ENCODE measurements at regions of chr4 and their contacts with region 1.

Region 1: DNA sequence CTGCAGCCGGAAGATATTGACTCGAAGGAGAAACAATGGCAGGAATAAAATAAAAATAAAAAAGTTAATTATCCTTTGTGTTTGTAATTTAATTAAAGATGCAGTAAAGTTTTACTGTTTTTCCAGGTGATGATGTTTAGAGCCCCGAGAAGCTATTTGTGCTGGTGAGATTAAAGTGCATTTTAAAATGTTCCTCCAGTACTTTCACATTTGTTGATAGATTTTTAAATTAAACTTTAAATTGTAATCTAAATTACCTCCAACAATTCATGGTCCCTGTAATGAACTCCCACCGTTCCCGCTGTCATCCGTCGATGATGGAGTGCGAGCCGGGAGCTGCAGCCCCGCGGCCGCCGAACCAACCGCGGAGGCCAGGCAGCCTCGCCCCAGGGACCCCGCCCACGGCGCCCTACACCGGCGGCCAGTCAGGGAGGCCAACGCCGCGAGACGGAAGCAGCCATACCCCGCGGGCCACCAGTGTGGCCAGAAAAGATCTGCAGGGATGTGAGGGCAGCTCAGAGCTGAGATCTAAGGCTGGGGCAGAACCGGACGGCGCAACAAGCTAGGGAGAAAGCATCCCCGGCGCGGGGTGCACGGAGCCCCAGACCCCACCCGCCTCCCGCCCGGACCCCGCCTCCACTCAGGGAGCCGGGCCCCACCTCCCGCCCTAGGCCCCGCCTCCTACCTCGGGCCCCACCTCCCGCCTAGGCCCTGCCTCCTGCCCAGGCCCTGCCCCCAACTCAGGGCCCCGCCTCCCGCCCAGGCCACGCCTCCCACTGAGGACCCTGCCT is 104.0 kb downstream of the FAM53A start:
- DNase-seq: peak; percentile 59 to 93
- H3K4me3 ChIP-seq: peak overlapping the region; percentile 64
- H3K27ac ChIP-seq: no peak overlapping the region
- H3K4me1 ChIP-seq: peaks cover 13% of the 10 kb centered on the region; the same call in 1 of the 2 replicates
- H3K27me3 ChIP-seq: peaks cover 6% of the 10 kb centered on the region; the same call in 1 of the 2 replicates
- CTCF ChIP-seq: no peak

Region 2: DNA sequence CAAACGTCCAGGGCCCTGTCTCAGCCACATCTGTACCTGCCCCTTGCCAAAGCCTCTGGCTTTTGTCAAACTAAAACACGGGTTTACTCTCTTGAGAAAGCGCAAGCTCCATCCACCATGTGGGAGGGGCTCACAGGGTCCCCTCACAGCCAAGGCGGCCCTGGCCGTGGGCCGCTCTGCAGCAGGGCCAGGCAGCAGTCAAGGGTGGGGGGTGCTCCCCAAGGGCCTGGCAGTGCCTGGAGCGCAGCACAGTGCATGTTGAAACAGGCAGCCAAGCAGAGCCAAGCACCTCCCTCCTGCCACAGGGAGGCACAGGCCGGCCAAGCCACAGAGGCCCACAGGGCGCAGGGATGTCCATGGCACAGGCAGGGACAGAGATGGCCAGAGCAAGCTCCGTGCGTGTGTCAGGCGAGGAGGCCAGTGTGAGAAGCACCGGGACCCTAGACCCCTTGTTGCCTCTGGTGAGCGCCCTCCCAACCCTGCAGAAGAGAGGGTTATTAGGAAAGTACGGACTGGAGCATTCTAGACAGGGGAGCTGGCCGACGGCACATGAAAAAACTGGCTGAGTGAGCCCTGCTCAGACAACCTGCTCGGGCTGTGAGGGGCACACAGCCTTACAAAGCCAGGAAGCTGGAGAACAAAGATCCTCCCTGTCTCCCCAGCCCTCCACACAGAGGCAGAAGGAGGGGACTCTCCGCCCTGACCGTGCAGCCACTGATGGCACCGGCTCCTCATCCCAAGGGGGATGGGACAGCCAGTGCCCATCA is 65.0 kb after region 1 on chr4:
- CTCF ChIA-PET with region 1: no interaction called
- POLR2A ChIA-PET with region 1: interaction called, 21 read pairs
- intact Hi-C with region 1: no loop called
- DNase-seq: no peak
- H3K4me3 ChIP-seq: no peak overlapping the region
- H3K27ac ChIP-seq: no peak overlapping the region
- H3K4me1 ChIP-seq: no peaks in the 10 kb centered on the region
- H3K27me3 ChIP-seq: peaks cover 17% of the 10 kb centered on the region
- CTCF ChIP-seq: no peak

Region 3: DNA sequence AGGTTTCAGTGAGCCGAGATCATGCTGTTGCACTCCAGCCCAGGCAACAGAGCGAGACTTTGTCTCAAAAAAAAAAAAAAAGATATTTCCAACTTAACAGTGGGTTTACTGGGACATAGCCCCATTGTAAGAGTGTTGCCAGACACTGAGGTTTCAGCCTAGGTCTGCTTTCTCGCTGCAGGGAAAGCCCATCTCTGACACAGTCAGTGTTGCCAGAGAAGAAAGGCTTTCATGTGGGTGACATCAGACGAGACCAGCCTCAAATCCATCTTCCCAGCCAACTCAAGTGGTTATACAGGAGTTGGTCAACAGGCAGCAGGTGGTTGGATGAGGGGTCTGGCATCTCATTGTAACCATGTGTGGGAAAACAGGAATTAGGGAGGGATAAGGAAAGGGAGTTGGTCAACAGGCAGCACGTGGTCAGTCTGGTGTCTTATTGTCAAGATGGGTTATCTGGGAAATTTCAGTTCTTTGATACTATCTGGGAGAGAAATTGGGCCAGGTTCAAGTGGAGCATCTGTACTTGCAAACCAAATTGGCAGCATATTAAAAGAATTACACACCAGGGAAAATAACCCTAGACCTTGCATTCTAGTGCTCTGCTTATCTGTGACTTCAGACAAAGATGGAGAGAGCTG is 387.5 kb after region 1 on chr4:
- CTCF ChIA-PET with region 1: no interaction called
- POLR2A ChIA-PET with region 1: no interaction called
- intact Hi-C with region 1: no loop called
- DNase-seq: no peak
- H3K4me3 ChIP-seq: no peak overlapping the region
- H3K27ac ChIP-seq: no peak overlapping the region
- H3K4me1 ChIP-seq: no peaks in the 10 kb centered on the region
- H3K27me3 ChIP-seq: no peaks in the 10 kb centered on the region
- CTCF ChIP-seq: no peak

Region 4: GRCh38 chr4:2552806-2553205 is 972.7 kb after region 1 on chr4:
- CTCF ChIA-PET with region 1: no interaction called
- POLR2A ChIA-PET with region 1: no interaction called
- intact Hi-C with region 1: no loop called
- DNase-seq: no peak
- H3K4me3 ChIP-seq: no peak overlapping the region
- H3K27ac ChIP-seq: no peak overlapping the region
- H3K4me1 ChIP-seq: no peaks in the 10 kb centered on the region
- H3K27me3 ChIP-seq: no peaks in the 10 kb centered on the region
- CTCF ChIP-seq: no peak